Right ventricle myocardium inferior (tissue), 1 donor: ENCODE measurements at regions of chr1 and their contacts with region 1.

Region 1: DNA sequence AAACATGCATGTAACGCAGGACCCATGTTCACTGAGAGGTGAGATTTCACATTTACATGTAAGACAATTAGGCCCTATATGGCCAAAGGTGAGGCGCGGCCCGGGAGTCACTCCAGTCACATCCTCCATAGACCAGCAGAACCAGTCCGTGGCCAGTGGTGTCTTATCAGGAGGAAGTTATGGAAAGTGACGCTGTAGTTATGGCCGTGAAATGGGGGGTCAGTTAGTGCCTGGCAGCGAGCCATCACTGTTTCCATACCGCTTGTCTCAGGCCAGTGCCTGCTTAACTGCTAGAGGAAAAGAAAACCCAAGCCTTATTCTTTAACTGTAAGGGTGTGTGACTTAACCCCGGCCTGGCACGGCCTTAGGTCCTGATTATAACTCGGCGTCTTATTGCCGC is 6.1 kb downstream of the C1orf159 start:
- DNase-seq: no peak
- ATAC-seq: no peak

Region 2: DNA sequence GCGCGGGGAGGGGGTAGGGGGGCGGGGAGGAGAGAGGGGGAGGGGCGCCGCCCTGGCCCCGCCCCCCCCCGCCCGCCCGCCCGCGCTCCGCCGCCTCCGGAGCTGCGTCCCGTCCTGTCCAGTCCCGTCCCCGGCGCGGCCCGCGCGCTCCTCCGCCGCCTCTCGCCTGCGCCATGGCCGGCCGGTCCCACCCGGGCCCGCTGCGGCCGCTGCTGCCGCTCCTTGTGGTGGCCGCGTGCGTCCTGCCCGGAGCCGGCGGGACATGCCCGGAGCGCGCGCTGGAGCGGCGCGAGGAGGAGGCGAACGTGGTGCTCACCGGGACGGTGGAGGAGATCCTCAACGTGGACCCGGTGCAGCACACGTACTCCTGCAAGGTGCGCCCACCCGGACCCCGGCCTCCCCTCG is 89.7 kb before region 1 on chr1 and contains the start of gene AGRN:
- intact Hi-C with region 1: loop called (anchors 5 kb)
- DNase-seq: peak; percentile 79
- ATAC-seq: peak; percentile 54
- total RNA-seq, gene AGRN: 14.1 TPM

Region 3: DNA sequence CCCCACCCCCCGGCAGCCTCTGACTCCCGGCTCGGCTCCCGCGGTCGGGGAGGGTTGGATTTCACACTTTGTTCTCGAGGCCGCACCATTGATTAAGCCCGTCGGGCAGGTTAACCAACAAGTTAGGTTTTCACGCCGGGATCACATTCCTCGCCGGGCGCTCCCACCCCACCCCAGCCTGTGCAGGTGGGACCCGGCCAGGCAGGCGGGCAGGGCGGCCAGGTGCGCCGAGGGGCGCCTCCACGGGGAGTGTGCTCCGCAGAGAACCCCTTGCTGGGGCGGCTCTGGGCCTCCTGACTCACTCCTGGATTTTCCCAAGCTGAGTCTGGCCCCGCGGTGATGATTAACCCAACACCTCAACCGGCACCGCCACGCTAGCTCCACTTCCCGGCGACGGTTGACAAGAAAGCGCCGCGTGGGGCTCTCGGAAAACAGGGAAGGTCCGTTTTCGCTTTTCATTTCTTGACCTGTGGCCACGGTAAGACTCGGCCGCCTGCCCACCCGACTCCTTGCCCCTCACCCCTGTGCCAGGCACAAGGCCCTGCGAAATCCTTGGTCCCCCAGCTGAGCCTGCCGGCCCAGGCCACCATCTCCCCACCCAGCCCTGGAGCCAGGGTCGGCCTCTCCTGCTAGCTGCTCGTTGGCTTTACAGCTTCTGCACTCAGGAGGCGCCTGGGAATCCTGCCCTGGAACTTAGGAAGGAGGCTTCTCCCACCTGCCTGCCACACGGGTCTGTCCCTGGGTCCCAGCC is 55.1 kb after region 1 on chr1:
- intact Hi-C with region 1: no loop called
- DNase-seq: peak; percentile 55
- ATAC-seq: no peak